HCT116 (cell line): ENCODE measurements at regions of chr6 and their contacts with region 1.

Region 1: GRCh38 chr6:133568970-133569889 is 319.7 kb upstream of the TCF21 start:
- DNase-seq: peak; percentile 87
- ATAC-seq: peak; percentile 97
- H3K4me3 ChIP-seq: peak overlapping the region; percentile 41 to 55
- H3K27ac ChIP-seq: peak overlapping the region; percentile 76
- H3K4me1 ChIP-seq: peaks cover 4 to 14% of the 10 kb centered on the region in 2 experiments
- H3K27me3 ChIP-seq: no peaks in the 10 kb centered on the region
- CTCF ChIP-seq: peak; percentile 90 to 98 (median 94)
- POLR2A ChIP-seq: no peak
- RAD21 ChIP-seq: peak; percentile 87

Region 2: GRCh38 chr6:133923938-133924593 is 354.8 kb after region 1 on chr6:
- CTCF ChIA-PET with region 1: interaction called, 193 read pairs
- POLR2A ChIA-PET with region 1: no interaction called
- RAD21 ChIA-PET with region 1: interaction called, 4 to 13 read pairs
- intact Hi-C with region 1: loop called (anchors 1 kb)
- DNase-seq: peak; percentile 78
- ATAC-seq: peak; percentile 92
- H3K4me3 ChIP-seq: no peak overlapping the region
- H3K27ac ChIP-seq: no peak overlapping the region
- H3K4me1 ChIP-seq: peaks cover 3 to 5% of the 10 kb centered on the region in 2 experiments; a peak in 1 of 4 replicates
- H3K27me3 ChIP-seq: no peaks in the 10 kb centered on the region
- CTCF ChIP-seq: peak; percentile 69 to 92 (median 88)
- POLR2A ChIP-seq: no peak
- RAD21 ChIP-seq: peak; percentile 98